ENCODE measurements at regions of chr1 and their contacts with region 1.

Region 1: GRCh38 chr1:183227963-183228649 is 42.0 kb downstream of the LAMC2 start:
- DNase-seq: peak; percentile 54
- H3K4me3 ChIP-seq: no peak overlapping the region
- H3K27ac ChIP-seq: no peak overlapping the region
- H3K4me1 ChIP-seq: peaks cover 13% of the 10 kb centered on the region
- H3K27me3 ChIP-seq: no peaks in the 10 kb centered on the region
- CTCF ChIP-seq: peak; percentile 80 to 87
- POLR2A ChIP-seq: no peak

Region 2: GRCh38 chr1:183144752-183145151 is 83.4 kb before region 1 on chr1:
- CTCF ChIA-PET with region 1: interaction called, 16 read pairs
- POLR2A ChIA-PET with region 1: no interaction called
- dilution Hi-C with region 1: no loop called
- intact Hi-C with region 1: no loop called
- DNase-seq: no peak
- H3K4me3 ChIP-seq: no peak overlapping the region
- H3K27ac ChIP-seq: no peak overlapping the region
- H3K4me1 ChIP-seq: peaks cover 10% of the 10 kb centered on the region
- H3K27me3 ChIP-seq: no peaks in the 10 kb centered on the region
- CTCF ChIP-seq: no peak
- POLR2A ChIP-seq: no peak

Region 3: DNA sequence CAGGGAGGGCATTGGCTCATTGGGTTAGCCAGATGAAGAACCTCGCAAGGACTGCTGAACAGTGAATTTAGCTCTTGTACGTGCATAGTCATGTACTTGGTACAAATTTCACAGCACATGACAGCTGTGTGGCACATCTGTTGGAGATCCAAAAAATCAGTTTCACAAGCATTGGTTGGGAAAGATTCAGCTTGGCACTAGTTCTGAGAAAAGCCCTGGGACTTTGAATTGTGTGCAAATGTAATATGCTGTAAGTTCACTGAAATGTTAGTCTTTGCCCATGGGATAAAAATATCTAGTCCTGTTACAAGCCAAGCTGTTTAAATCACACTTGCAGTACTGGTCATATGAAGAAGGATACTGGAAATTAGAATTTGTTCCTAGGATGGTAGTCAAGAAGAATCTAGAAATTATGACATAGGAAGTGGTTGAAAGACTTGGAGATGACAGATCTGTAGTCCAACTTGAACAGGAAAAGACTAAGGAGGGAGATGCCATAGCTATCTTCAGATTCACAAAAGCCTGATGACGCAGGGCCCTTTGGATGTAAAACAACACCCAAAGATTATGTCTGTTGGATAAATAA is 22.8 kb before region 1 on chr1:
- CTCF ChIA-PET with region 1: interaction called, 16 read pairs
- POLR2A ChIA-PET with region 1: no interaction called
- dilution Hi-C with region 1: no loop called
- intact Hi-C with region 1: no loop called
- DNase-seq: no peak
- H3K4me3 ChIP-seq: no peak overlapping the region
- H3K27ac ChIP-seq: no peak overlapping the region
- H3K4me1 ChIP-seq: no peaks in the 10 kb centered on the region
- H3K27me3 ChIP-seq: no peaks in the 10 kb centered on the region
- CTCF ChIP-seq: no peak
- POLR2A ChIP-seq: no peak